Ovary (tissue), 10 donors: ENCODE measurements at regions of chr15 and their contacts with region 1.

Region 1: GRCh38 chr15:58056015-58056414 is 9.5 kb downstream of the ALDH1A2 start:
- DNase-seq: no peak
- H3K4me3 ChIP-seq: no peak overlapping the region
- H3K27ac ChIP-seq: no peak overlapping the region
- H3K4me1 ChIP-seq: no peaks in the 10 kb centered on the region
- H3K27me3 ChIP-seq: no peaks in the 10 kb centered on the region
- CTCF ChIP-seq: no peak
- EP300 ChIP-seq: no peak
- POLR2A ChIP-seq: no peak

Region 2: DNA sequence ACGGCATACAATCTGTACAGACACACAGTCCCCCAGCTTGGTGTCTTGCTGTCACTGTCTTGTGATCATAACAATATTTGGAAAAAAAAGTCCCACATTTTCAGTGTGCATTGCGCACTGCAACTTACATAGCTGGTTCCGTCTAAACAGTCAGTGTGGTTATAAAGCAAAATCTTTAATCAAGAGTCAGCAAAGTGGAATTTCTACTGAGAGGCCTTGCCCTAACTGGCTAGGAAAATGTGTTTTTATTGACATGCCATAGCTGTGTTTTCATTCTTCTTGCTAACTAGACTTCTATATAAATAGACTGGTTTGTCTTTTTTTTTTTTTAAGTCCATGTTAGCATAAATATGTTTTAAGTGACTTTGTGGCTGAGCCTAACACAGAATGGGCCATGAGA is 174.7 kb before region 1 on chr15:
- intact Hi-C with region 1: loop called in 1 of 4 experiments (anchors 10 kb)
- DNase-seq: no peak
- H3K4me3 ChIP-seq: no peak overlapping the region
- H3K27ac ChIP-seq: no peak overlapping the region
- H3K4me1 ChIP-seq: peaks cover 7% of the 10 kb centered on the region
- H3K27me3 ChIP-seq: no peaks in the 10 kb centered on the region
- CTCF ChIP-seq: no peak
- EP300 ChIP-seq: no peak
- POLR2A ChIP-seq: no peak

Region 3: GRCh38 chr15:57994221-57995049 is 61.6 kb before region 1 on chr15:
- intact Hi-C with region 1: no loop called
- DNase-seq: no peak
- H3K4me3 ChIP-seq: no peak overlapping the region
- H3K27ac ChIP-seq: no peak overlapping the region
- H3K4me1 ChIP-seq: peaks cover 7% of the 10 kb centered on the region
- H3K27me3 ChIP-seq: no peaks in the 10 kb centered on the region
- CTCF ChIP-seq: no peak
- EP300 ChIP-seq: no peak
- POLR2A ChIP-seq: no peak